MCF 10A (cell line): ENCODE measurements at regions of chr19 and their contacts with region 1.

Region 1: DNA sequence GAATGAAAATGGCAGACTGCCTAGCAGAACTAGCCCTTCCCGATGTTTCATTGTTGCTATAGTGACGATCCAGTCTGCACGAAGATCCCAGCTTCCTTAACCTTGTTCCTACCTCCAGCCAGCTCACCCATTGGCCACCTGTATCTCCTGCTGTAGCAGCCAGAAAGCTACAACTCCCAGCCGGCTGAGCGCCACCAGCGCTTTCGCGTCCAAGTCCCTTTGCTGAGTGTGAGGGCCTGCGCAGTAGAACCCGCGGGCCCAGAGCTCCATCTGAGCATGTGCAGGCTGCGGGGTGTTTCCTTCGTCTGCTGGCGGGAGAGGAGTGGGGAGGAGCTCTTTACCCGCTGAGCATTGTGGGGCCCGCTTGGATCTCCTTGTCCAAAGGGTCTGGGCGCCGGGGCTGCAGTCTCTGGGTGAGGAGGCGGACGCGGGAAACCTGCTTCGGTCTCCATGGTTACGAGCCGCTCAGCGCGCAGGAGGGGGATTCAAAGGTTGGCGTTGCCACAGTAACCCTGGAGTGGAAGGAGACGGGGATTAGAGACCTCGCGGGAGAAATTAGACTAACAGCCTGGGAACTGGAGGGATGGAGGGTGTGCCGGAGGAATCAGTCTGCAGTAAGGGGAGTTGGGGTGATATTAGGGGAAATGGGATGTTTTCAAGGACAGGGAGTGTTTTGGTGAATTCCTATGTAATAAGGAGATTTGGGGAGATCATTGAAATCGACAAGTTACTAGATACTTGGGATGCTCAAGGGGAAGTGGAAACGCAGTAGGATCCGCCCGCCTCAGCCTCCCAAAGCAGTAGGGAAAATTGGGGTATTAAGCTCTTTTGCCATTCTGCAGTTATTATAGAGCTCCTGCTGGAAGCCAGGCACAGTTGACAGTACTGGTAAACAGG is 33.5 kb downstream of the ZSWIM9 start:
- DNase-seq: peak; percentile 97
- H3K4me3 Mint-ChIP-seq: no peak overlapping the region
- H3K27ac Mint-ChIP-seq: no peak overlapping the region
- H3K4me1 Mint-ChIP-seq: no peaks in the 10 kb centered on the region
- H3K27me3 Mint-ChIP-seq: no peaks in the 10 kb centered on the region
- CTCF ChIP-seq: no peak

Region 2: GRCh38 chr19:48170038-48170812 is 33.8 kb before region 1 on chr19 and contains the starts of genes LIG1 and ZSWIM9:
- CTCF ChIA-PET with region 1: no interaction called
- POLR2A ChIA-PET with region 1: interaction called, 13 read pairs
- intact Hi-C with region 1: no loop called
- DNase-seq: peak; percentile 95
- H3K4me3 Mint-ChIP-seq: peak within 1 kb of the TSS; percentile 90
- H3K27ac Mint-ChIP-seq: peak within 1 kb of the TSS; percentile 90
- H3K4me1 Mint-ChIP-seq: peaks cover 19% of the 10 kb centered on the region
- H3K27me3 Mint-ChIP-seq: no peaks in the 10 kb centered on the region
- CTCF ChIP-seq: no peak
- total RNA-seq, gene LIG1: 12.2 and 14.6 TPM in 2 replicates
- total RNA-seq, gene ZSWIM9: 4.8 and 5.5 TPM in 2 replicates

Region 3: DNA sequence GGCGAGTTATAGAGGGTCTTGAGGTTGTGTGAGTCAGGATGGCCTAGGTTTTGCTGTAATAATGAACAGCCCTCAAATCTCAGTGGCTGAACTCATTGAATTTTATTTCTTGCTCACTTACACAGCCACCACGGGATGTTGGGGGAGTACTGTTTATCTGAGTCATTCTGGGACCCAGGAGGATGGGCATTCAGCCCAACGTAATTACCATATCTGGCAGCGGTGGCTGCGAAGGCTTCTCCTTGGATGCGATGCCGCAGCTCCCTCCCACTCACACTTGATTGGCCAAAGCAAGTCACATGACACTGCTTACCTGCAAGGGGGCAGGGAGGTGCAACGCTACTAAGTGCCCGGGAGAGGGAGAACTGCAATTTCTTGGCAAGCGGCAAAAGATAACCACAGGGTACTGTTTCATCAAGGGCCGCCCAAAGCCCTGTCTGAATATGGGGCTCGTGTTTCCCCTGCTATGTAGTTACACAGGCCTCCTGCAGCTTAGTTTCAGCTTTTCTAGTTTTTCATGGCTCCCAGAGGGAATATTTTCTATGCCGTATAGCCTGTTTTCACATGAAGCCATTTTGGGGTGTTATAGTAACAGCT is 13.6 kb before region 1 on chr19:
- CTCF ChIA-PET with region 1: interaction called, 5 read pairs
- POLR2A ChIA-PET with region 1: interaction called, 10 read pairs
- intact Hi-C with region 1: no loop called
- DNase-seq: peak; percentile 67
- H3K4me3 Mint-ChIP-seq: no peak overlapping the region
- H3K27ac Mint-ChIP-seq: no peak overlapping the region
- H3K4me1 Mint-ChIP-seq: no peaks in the 10 kb centered on the region
- H3K27me3 Mint-ChIP-seq: no peaks in the 10 kb centered on the region
- CTCF ChIP-seq: no peak

Region 4: GRCh38 chr19:48216933-48217332 is 13.0 kb after region 1 on chr19:
- CTCF ChIA-PET with region 1: interaction called, 6 read pairs
- POLR2A ChIA-PET with region 1: interaction called, 21 read pairs
- intact Hi-C with region 1: no loop called
- DNase-seq: no peak
- H3K4me3 Mint-ChIP-seq: no peak overlapping the region
- H3K27ac Mint-ChIP-seq: no peak overlapping the region
- H3K4me1 Mint-ChIP-seq: no peaks in the 10 kb centered on the region
- H3K27me3 Mint-ChIP-seq: no peaks in the 10 kb centered on the region
- CTCF ChIP-seq: no peak